Body of pancreas (tissue), 4 donors: ENCODE measurements at regions of chr17 and their contacts with region 1.

Region 1: GRCh38 chr17:1365445-1366039 is 34.5 kb downstream of the YWHAE start:
- DNase-seq: peak; percentile 61 to 78 (median 66)
- ATAC-seq: peak; percentile 87
- H3K4me3 ChIP-seq: no peak overlapping the region
- H3K27ac ChIP-seq: peak overlapping the region in 1 of 4 donors; percentile 59
- H3K4me1 ChIP-seq: peaks cover 40% of the 10 kb centered on the region
- H3K27me3 ChIP-seq: no peaks in the 10 kb centered on the region
- CTCF ChIP-seq: peak; percentile 62 to 88 (median 78)
- POLR2A ChIP-seq: no peak

Region 2: DNA sequence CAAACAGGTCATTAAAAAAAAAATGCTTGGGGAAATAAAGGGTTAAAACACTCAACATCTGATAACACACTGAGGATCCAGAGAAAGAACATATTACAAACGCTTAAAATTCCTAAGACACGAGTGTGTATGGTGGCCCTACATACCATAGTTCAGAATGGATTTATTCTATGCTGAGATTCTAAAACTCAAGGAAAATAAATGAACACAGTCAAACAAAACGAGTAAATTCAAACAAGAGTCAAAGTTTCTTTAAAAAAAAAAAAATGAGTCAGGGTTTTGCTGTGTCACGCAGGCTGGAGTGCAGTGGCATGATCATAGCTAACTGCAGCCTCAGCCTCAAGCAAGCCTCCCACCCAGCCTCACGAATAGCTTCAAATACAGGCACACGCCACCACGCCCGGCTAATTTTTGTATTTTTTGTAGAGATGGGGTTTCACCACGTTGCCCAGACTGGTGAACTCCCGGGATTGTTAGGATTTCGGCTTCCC is 73.1 kb after region 1 on chr17:
- intact Hi-C with region 1: no loop called
- DNase-seq: no peak
- ATAC-seq: no peak
- H3K4me3 ChIP-seq: no peak overlapping the region
- H3K27ac ChIP-seq: no peak overlapping the region
- H3K4me1 ChIP-seq: no peaks in the 10 kb centered on the region
- H3K27me3 ChIP-seq: no peaks in the 10 kb centered on the region
- CTCF ChIP-seq: no peak
- POLR2A ChIP-seq: no peak

Region 3: GRCh38 chr17:1511756-1512321 is 146.3 kb after region 1 on chr17:
- intact Hi-C with region 1: loop called (anchors 5 kb)
- DNase-seq: no peak
- ATAC-seq: no peak
- H3K4me3 ChIP-seq: no peak overlapping the region
- H3K27ac ChIP-seq: peak overlapping the region in 2 of 4 donors; percentile 6 to 15
- H3K4me1 ChIP-seq: peaks cover 19% of the 10 kb centered on the region
- H3K27me3 ChIP-seq: no peaks in the 10 kb centered on the region
- CTCF ChIP-seq: no peak
- POLR2A ChIP-seq: no peak